ENCODE measurements at regions of chr6 and their contacts with region 1.

Region 1: DNA sequence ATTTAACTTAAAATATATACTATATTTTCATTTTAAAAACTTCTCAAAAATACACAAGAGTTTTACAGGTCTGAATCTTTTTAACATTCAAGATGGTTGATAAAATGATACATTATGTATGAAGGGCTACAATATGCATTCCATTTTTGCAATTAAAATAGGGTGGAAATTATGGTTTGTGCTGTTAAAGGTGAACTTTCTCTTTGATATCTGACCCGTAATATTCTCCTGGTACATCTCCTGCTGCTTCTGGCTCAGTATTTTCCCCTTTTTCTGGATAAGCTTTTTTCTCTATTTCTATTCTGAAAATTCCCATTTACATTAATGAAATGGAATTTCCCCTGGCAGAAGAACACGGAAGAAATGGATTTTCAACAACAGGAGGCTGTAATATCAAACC is 27.4 kb upstream of the LCA5 start:
- DNase-seq: no peak
- CTCF ChIP-seq: no peak

Region 2: GRCh38 chr6:79453558-79454042 is 111.0 kb before region 1 on chr6:
- CTCF ChIA-PET with region 1: no interaction called
- POLR2A ChIA-PET with region 1: no interaction called
- DNase-seq: no peak
- CTCF ChIP-seq: no peak

Region 3: DNA sequence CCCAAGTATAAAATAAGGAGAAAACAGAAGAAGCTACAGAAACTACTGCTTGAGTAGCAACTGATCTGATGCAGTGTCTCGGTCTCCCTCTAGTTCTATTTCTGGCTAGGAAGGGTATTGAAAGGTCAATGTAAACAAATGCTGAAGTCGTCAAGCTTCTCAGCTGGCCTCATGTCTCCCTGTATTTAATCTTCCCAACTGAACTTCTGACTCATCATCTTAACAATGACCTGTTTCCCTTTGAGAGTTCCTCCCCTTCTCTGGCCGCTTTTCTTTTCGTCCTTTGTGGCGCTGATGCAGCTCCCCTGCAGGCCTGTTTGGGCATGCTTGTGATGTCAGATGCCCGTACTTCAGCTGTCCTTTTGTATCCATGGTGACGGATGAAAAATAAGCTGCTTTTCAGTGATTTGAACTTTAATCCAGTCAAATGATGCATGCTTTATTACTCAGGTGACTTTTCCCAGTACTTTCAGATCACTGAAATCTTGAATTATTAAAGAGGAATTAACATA is 19.6 kb before region 1 on chr6:
- CTCF ChIA-PET with region 1: interaction called, 10 read pairs
- POLR2A ChIA-PET with region 1: no interaction called
- DNase-seq: peak; percentile 77
- CTCF ChIP-seq: peak; percentile 35

Region 4: GRCh38 chr6:79646006-79646405 is 81.4 kb after region 1 on chr6:
- CTCF ChIA-PET with region 1: no interaction called
- POLR2A ChIA-PET with region 1: no interaction called
- DNase-seq: no peak
- CTCF ChIP-seq: no peak